ENCODE measurements at regions of chr12 and their contacts with region 1.

Region 1: DNA sequence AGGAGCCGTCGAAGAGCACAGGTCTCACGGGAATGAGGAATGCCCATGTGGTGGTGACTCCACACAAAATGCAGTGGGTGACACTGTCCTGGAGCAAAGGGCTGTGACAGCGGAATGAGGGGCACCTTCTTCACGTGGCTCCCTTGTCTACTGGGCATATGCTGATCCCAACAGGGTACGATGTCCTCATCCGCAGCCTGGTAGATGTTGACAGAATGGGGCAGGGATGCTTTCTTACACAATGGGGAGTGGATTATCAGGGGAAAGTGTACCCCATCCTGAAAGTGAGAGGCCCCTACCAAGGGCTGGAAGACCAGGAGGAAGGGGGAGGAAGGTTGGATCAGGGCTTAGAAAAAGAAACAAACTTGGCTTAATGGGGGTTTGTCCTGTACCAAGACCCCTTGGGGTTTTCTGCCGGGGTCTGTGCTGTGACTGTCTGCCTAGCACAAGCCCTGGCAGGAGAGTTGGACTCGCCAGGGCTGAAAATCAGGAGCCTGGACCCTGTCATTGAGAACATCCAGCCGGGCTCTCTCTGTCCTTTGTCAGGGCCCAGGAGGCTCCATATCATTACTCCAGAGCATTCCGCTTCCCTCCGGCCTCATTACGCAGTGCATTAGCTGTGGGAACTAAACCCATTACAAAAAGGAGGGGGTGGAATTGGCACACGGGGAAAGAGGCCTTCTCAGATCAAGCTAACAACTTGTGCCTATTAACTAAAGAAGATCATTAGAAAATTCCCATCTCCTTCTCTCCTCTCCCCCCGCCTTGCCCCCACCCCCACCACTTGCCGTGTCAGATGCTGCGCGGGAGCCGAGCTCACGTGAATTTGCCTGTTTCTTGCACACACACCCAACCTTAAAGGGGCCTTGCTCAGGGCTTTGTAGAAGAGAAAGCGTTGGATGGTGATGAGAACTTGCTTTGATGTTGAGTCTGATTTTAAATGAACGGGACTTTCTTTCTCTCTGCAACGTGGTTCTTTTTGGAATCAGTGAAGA is 171.8 kb upstream of the PARP11 start:
- DNase-seq: peak in 18 of 42 donors; percentile 5 to 62 (median 28)

Region 2: DNA sequence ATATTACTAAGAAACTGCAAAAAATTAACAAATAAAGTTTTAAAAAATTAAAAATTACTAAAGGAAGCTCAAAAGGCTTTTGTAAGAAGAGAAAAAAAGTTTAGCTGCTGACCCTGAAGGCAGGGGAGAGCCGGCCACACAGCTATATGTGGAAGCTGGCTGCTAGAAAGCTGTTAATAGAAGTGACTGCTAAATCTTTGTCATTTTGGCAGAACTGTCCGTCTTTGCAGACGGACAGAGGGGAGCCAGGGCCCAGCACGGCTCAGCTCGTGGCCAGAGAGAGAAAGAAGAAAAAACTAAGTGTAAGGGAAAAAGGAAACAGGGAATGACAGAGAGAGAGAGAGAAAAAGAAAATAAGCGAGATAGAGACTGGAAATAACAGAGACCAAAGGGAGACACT is 526.1 kb before region 1 on chr12:
- intact Hi-C with region 1: no loop called
- DNase-seq: no peak

Region 3: DNA sequence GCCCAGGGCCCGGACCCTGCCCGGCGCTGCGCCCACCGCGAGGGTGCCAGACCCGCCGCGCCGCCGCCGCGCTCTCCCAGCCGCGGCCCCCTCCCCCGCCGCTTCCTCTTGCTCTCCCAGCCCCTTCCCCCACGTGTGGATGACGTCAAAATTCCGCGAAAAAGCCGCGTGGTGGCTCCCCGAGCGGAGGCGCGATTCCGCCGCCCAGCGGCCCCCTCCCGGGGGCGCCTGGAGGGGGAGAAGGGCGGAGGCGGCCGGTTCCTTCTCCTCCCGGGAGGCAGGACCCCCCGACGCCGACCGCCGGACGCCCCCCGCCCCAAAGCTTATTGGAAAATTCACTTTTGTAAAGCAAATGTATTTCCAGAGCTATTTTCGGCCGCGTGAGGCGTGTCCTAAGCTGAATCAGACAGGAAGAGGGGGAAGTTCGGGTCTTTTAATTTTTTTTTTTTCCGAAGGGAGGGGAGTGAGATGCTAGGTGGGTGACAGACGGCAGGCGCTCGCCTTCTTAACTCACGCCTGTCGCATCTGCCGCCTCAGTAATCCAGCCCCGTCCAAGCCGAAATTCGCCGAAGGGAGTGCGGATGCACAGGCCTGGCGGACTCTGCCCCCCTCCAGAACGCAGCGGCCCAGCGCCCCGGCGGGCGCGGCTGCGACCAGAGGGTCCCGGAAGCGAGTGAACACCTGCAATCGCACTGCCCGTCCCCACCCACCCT is 224.4 kb after region 1 on chr12:
- intact Hi-C with region 1: loop called (anchors 5 kb)
- DNase-seq: peak in 41 of 42 donors; percentile 50 to 91 (median 80)